Dorsolateral prefrontal cortex (tissue), 120 donors: ENCODE measurements at regions of chr15 and their contacts with region 1.

Region 1: GRCh38 chr15:70636540-70637165 is 126.7 kb downstream of the UACA start:
- DNase-seq: peak in 2 of 10 donors; percentile 39 to 43
- H3K4me3 ChIP-seq: peak overlapping the region in 1 of 59 donors; percentile 3
- H3K27ac ChIP-seq: no peak overlapping the region
- H3K27me3 ChIP-seq: peaks cover 0 to 3% (median 0%) of the 10 kb centered on the region in 45 donors
- CTCF ChIP-seq: peak in 52 of 56 donors; percentile 16 to 67 (median 46)

Region 2: DNA sequence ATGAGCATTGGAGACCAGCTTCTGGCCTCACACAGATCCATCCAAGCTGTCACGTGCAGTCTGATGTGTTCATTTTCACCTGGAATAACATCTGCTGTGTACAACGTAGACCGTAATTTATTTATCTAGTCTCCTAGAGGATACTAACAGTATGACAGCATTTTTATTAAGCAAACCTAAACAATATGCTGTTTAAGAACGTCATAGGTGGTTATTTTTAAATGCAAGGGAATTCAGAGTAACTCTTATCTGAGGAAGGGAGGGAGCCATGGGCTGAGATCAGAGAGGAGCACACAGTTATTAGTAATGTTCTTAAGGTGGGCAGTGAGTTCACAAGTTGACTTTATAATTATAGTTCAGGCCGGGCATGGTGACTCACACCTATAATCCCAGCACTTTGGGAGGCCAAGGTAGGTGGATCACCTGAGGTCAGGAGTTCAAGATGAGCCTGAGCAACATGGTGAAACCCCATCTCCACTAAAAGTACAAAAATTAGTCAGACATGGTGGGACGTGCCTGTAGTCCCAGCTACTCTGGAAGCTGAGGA is 66.9 kb before region 1 on chr15:
- intact Hi-C with region 1: loop called in 1 of 2 experiments (anchors 5 kb)
- DNase-seq: no peak
- H3K4me3 ChIP-seq: no peak overlapping the region
- H3K27ac ChIP-seq: no peak overlapping the region
- H3K27me3 ChIP-seq: peaks cover 0 to 8% (median 0%) of the 10 kb centered on the region in 45 donors
- CTCF ChIP-seq: no peak